AG04449 (cell line): ENCODE measurements at regions of chr17 and their contacts with region 1.

Region 1: DNA sequence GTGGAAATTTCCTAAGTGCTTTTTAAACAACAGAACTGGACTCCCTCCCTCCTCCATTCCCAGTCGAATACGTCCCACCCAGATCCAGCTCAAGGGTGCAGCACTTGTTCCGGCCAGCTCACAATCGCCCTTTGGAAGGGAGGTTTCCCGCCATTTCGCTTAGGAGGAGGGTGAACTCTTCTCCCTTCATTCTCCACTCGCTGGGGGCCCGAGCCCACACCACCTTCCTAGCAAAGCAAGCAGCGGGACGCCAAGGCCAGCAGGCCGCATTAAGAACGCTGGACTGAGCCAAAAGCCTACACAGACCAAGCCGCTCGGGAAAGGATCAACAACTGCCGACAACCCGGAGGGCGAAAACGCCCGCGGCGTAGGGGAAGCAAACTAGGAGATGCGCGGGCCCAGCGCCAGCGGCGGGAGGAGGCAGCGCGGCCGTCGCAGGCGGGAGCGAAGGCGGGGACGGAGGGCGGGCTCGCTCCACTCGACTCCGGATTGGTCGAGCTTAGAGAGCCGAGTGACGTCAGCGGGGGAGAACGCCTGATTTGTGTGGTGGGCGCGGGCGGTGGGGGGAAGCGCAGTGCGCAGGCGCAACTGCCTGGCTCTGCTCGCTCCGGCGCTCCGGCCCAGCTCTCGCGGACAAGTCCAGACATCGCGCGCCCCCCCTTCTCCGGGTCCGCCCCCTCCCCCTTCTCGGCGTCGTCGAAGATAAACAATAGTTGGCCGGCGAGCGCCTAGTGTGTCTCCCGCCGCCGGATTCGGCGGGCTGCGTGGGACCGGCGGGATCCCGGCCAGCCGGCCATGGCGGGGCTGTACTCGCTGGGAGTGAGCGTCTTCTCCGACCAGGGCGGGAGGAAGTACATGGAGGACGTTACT is at the start of gene PPM1D:
- DNase-seq: peak; percentile 84
- H3K4me3 ChIP-seq: peak within 1 kb of the TSS; percentile 96
- CTCF ChIP-seq: no peak

Region 2: DNA sequence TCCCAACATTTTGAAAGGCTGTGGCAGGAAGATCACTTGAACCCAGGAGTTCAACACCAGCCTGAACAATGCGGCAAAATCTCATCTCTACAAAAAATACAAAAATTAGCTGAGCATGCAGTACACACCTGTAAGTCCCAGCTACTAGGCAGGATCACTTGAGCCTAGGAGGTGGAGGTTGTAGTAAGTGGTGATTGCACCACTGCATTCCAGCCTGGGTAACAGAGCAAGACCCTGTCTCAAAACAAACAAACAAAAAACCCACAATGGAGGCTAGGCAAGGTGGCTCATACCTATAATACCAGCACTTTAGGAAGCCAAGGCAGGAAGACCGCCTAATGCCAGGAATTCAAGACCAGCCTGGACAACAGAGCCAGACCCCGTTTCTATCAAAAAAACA is 85.8 kb before region 1 on chr17:
- CTCF ChIA-PET with region 1: no interaction called
- POLR2A ChIA-PET with region 1: no interaction called
- DNase-seq: no peak
- H3K4me3 ChIP-seq: no peak overlapping the region
- CTCF ChIP-seq: no peak

Region 3: DNA sequence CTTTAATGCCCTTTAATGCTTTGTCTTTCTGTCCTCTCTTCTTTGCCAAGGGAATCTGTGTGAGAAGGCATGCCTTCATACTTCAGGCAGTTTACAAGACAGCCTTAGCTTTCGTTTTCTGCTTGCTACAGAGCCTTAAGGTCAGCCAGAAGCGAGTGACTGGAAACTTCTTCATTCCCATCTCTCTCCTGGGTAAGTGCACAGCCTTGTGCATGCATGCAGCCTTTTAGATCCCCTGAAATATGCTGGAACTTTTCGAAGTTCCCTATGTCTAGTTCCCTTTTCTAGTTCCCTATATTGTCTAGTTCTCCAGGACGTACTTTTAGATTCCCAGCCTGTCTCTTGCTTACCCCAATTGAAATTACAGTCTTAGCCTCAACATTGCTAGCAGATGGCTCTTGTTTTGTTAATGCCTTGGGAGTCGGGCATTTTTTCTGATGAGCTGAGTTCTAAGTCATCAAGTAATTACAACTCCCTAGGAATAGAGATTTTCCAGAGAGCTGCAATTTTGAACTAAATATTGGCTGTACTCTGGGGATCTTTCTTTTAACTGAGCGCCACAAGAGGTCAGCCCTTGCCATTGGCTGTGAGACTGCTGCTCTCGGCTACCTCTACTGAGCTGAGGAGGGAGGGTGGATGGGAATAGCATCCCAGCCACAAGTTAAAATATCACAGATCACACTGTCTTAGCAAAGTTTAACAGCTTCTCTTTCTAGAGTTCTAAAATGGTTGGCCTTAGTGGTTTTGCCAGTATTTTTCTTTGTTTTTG is 22.5 kb before region 1 on chr17:
- CTCF ChIA-PET with region 1: interaction called, 13 read pairs
- POLR2A ChIA-PET with region 1: interaction called, 12 read pairs
- DNase-seq: no peak
- H3K4me3 ChIP-seq: peak overlapping the region; percentile 46
- CTCF ChIP-seq: peak; percentile 10

Region 4: DNA sequence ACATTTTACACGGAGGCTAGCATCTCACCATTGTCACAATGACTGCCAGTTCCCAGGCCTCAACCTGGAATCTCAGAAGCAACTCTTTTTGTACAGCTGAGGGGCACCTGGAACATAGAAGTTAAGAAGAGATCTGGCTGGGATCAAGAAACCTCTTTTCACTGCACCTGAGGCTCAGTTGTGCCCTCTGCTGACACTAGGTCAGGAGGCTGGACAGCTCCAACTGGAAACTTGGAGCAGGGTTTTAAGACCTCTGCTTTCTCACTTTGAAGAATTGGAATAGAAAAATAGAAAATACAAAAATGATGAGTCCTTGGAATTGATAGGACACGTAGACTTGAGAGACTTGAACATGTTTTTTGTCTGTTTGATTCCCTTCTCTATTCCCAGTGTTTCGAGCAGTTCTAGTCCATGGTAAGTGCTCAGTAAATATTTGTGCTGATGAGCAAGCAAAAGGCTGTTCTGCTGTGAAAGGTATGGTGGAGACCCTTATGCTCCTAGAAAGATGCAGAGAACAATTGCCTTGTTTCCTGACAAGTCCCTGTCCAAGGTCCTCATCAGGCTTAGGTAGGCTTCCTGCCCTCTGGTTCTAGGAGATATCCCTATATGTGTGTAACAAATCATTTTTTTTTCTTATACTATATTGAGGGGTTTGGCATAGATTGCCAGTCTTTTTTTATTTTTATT is 13.4 kb before region 1 on chr17:
- CTCF ChIA-PET with region 1: interaction called, 12 read pairs
- POLR2A ChIA-PET with region 1: interaction called, 3 read pairs
- DNase-seq: no peak
- H3K4me3 ChIP-seq: no peak overlapping the region
- CTCF ChIP-seq: peak; percentile 26

Region 5: DNA sequence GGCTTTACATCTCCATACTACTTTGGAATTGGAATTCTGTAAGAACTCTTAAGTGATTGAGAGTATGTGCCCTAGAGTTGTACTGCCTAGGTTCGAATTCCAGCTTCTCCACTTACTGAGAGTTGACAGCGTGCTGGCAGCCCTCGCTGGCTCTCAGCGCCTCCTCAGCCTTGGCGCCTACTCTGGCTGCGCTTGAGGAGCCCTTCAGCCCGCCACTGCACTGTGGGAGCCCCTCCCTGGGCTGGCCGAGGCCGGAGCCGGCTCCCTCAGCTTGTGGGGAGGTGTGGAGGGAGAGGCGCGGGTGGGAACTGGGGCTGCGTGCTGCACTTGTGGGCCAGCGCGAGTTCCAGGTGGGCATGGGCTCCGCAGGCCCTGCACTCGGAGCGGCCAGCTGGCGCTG is 13.5 kb after region 1 on chr17:
- CTCF ChIA-PET with region 1: interaction called, 11 read pairs
- POLR2A ChIA-PET with region 1: no interaction called
- DNase-seq: no peak
- H3K4me3 ChIP-seq: no peak overlapping the region
- CTCF ChIP-seq: no peak